MCF 10A (cell line): ENCODE measurements at regions of chr13 and their contacts with region 1.

Region 1: DNA sequence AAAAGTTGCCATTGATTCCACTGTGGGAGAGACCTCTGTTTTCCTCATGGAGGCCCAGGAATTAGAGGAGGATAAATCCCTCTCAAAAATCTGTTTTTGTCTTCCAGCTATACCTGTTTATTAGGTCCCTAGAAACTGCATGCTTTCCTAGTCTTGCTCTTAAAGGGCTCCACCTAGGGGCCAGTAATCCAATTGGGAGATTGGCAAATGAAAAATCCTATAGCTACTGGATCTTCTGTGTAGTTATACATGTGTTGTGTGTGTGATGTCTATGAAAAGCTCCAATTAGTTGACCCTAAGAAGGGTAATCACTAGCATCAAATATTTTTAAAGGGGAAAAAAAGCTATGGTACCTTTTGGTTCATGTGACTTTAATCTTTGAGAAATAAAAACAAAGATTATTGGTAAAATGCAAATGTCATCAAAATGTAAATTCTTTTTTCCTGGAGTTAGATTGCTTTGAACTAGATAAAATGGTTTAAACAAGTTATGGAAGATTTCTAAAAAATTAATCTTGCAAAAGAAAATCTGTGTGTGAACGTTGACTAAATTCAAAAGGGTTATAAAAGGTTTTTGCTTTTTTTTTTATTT is 63.4 kb upstream of the C1QTNF9B start:
- DNase-seq: peak; percentile 65
- H3K4me3 Mint-ChIP-seq: no peak overlapping the region
- H3K27ac Mint-ChIP-seq: no peak overlapping the region
- H3K4me1 Mint-ChIP-seq: peaks cover 28% of the 10 kb centered on the region
- H3K27me3 Mint-ChIP-seq: no peaks in the 10 kb centered on the region
- CTCF ChIP-seq: peak; percentile 57

Region 2: DNA sequence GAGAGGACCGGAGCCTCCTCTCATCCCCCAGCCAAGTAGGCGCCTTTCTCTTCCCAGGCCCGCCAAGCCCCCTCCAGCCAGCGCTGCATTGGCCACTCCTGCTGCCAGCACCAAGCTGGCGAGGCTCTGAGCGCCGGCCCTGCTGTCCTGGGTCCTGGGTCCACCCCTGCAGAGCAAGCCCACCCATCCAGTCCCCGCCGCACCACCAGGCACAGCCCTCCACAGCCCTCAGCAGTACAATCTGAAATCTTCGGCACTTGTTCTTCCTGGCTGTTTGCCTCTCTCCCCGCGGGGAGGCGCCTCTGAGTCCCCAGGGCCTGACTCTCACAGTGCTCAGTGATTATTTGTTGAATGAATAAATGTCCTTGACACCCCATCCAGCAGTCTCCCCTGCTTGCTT is 1016.3 kb before region 1 on chr13:
- CTCF ChIA-PET with region 1: no interaction called
- POLR2A ChIA-PET with region 1: no interaction called
- intact Hi-C with region 1: no loop called
- DNase-seq: no peak
- H3K4me3 Mint-ChIP-seq: no peak overlapping the region
- H3K27ac Mint-ChIP-seq: no peak overlapping the region
- H3K4me1 Mint-ChIP-seq: no peaks in the 10 kb centered on the region
- H3K27me3 Mint-ChIP-seq: no peaks in the 10 kb centered on the region
- CTCF ChIP-seq: no peak

Region 3: GRCh38 chr13:23899555-23899954 is 61.1 kb before region 1 on chr13:
- CTCF ChIA-PET with region 1: interaction called, 29 read pairs
- POLR2A ChIA-PET with region 1: no interaction called
- intact Hi-C with region 1: no loop called
- DNase-seq: peak; percentile 52
- H3K4me3 Mint-ChIP-seq: no peak overlapping the region
- H3K27ac Mint-ChIP-seq: no peak overlapping the region
- H3K4me1 Mint-ChIP-seq: no peaks in the 10 kb centered on the region
- H3K27me3 Mint-ChIP-seq: peaks cover 8% of the 10 kb centered on the region
- CTCF ChIP-seq: peak; percentile 47

Region 4: DNA sequence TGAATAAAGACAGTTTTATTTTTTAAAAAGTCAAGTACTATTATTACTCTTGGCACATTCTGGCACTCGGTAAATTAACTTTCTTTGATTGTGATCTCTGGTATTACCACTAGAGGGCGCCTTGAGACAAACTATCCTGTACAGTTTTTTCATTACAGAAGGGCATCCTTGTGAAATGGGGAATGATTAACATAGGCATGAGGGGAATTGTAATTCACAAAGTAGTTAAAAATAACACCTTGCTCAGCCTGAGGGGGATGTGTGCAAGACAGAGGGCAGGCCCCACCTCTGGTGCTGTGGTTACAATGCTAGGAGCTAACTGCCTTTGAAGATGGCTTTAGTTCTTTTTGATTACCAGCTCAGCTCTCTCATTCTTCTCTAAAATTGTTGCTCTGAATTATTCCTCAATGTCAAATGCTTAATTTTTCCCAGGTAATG is 39.2 kb before region 1 on chr13:
- CTCF ChIA-PET with region 1: interaction called, 54 read pairs
- POLR2A ChIA-PET with region 1: interaction called, 6 read pairs
- intact Hi-C with region 1: loop called (anchors 1 kb)
- DNase-seq: peak; percentile 63
- H3K4me3 Mint-ChIP-seq: no peak overlapping the region
- H3K27ac Mint-ChIP-seq: no peak overlapping the region
- H3K4me1 Mint-ChIP-seq: no peaks in the 10 kb centered on the region
- H3K27me3 Mint-ChIP-seq: peaks cover 42% of the 10 kb centered on the region
- CTCF ChIP-seq: peak; percentile 63

Region 5: GRCh38 chr13:23979361-23980159 is 18.9 kb after region 1 on chr13:
- CTCF ChIA-PET with region 1: interaction called, 12 read pairs
- POLR2A ChIA-PET with region 1: interaction called, 4 read pairs
- intact Hi-C with region 1: no loop called
- DNase-seq: peak; percentile 69
- H3K4me3 Mint-ChIP-seq: peak overlapping the region; percentile 84
- H3K27ac Mint-ChIP-seq: no peak overlapping the region
- H3K4me1 Mint-ChIP-seq: peaks cover 11% of the 10 kb centered on the region
- H3K27me3 Mint-ChIP-seq: no peaks in the 10 kb centered on the region
- CTCF ChIP-seq: no peak

Region 6: GRCh38 chr13:25085125-25085742 is 1124.6 kb after region 1 on chr13:
- CTCF ChIA-PET with region 1: no interaction called
- POLR2A ChIA-PET with region 1: no interaction called
- intact Hi-C with region 1: no loop called
- DNase-seq: peak; percentile 66
- H3K4me3 Mint-ChIP-seq: no peak overlapping the region
- H3K27ac Mint-ChIP-seq: no peak overlapping the region
- H3K4me1 Mint-ChIP-seq: no peaks in the 10 kb centered on the region
- H3K27me3 Mint-ChIP-seq: no peaks in the 10 kb centered on the region
- CTCF ChIP-seq: peak; percentile 52